Motor neuron (in vitro differentiated cells): ENCODE measurements at regions of chr20 and their contacts with region 1.

Region 1: GRCh38 chr20:815914-816606 is 17.5 kb upstream of the FAM110A start:
- ATAC-seq: peak; percentile 5 to 61 (median 45)
- H3K4me3 ChIP-seq: no peak overlapping the region
- H3K27ac ChIP-seq: no peak overlapping the region
- H3K4me1 ChIP-seq: no peaks in the 10 kb centered on the region

Region 2: DNA sequence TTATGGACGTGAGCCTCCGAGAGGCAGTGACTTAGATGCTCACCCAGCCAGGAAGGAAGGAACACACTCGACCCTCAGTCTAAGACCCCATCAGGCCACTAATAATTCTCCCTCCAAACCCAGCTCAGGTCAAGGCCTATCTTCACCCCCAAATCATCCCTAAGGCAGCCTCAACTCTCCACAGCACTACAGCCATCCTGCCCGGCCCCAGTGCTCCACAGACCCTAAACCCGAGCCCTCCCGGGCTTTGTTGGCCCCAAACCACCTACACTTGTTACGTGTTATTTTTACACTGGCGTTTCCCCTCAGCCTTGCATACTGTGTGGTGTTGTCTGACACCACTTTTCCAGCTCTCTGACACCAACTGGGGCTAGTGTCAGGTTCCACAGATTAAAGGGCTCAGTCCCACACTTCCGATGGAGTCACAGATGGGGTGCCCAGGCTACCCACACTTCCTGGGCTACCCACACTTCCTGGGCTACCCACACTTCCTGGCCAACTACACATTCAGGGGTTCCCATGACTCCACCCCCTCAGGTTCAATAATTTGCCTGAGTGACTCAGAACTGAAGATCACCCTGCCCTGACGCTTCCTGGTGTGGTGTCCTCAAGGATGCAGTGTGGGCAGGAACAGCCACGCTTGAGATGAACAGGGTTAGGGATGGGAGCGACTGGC is 382.6 kb before region 1 on chr20:
- in situ Hi-C with region 1: no loop called
- ATAC-seq: peak in 2 of 8 experiments; percentile 7
- H3K4me3 ChIP-seq: no peak overlapping the region
- H3K27ac ChIP-seq: no peak overlapping the region
- H3K4me1 ChIP-seq: peaks cover 27 to 29% of the 10 kb centered on the region in 2 donors

Region 3: DNA sequence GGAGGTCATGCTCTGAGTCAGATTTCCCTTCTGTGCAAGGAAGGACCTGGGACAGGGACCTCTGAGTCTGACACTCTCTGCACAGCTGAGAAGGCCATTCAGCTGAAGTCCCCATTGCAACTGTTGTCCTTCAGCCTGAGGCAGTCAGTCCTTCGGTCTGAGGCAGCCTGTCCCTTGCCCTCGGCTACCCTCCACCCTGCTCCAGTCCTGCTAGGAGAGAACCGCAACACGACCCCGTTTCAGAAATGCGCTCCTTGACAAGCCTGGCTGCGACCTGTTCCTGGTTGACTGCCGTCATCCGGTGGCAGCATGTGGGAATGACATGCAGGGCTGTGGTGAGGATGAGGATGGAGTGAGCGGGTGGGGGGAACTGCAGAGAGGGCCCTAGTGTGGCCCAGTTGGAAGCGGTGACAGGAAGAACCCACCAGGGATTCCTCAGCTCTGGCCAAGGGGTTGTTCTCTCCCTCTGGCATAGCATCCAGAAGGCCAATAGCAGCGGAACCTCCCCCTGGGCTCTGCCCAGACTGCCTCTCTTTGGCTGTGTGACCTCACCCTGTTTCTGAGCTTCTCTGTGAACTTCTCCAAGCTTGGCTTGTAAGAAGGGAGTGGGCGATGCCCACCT is 140.4 kb after region 1 on chr20:
- in situ Hi-C with region 1: loop called (anchors 5 to 25 kb)
- ATAC-seq: peak; percentile 25 to 94 (median 86)
- H3K4me3 ChIP-seq: no peak overlapping the region
- H3K27ac ChIP-seq: no peak overlapping the region
- H3K4me1 ChIP-seq: no peaks in the 10 kb centered on the region

Region 4: GRCh38 chr20:1118336-1119127 is 302.5 kb after region 1 on chr20 and contains the start of gene PSMF1:
- in situ Hi-C with region 1: loop called in 2 of 9 experiments (anchors 10 to 25 kb)
- ATAC-seq: peak; percentile 94 to 99 (median 98)
- H3K4me3 ChIP-seq: peak within 1 kb of the TSS; percentile 75 to 99 (median 97)
- H3K27ac ChIP-seq: peak within 1 kb of the TSS; percentile 64 to 87
- H3K4me1 ChIP-seq: peaks cover 19 to 22% of the 10 kb centered on the region in 2 donors
- total RNA-seq, gene PSMF1: 26.2 to 59.1 (median 42.6) TPM

Region 5: DNA sequence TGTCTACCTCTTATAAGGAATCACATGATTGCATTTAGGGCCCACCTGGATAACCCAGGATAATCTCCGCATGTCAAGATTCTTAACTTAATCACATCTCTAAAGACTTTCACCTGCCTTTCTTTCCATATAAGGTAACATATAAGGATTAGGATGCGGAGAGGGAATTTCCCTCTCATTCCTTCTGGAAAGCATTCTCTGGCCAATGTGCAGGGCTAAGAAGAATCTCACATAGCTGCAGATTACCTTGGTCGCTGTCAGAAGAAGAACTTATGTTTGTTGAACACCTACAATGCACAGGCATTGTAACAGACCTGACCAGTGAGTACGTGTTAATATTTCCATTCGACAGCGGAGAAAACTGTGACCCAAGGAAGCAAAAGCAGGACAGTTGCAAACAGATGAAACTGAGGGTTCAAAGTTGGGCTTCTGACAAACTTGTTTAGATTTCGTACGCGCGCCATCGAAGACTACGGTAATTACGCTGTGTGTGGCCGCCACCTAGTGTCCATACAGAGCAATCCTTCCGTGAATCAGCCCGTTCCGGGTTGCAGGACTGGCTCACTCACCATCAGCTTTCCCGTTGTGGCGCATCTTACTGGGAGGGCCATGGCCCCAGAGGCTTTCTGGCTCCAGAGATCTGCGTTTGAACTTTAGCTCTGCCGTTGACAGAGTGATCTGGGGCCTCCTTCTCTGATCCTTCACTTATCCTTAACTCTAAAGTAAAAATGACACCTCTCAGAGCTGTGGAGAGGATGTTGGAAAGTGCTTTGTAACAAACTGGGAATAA is 396.7 kb after region 1 on chr20:
- in situ Hi-C with region 1: loop called in 3 of 9 experiments (anchors 25 kb)
- ATAC-seq: peak; percentile 82 to 99 (median 87)
- H3K4me3 ChIP-seq: no peak overlapping the region
- H3K27ac ChIP-seq: no peak overlapping the region
- H3K4me1 ChIP-seq: peaks cover 0 to 3% of the 10 kb centered on the region in 2 donors